Astrocyte of the cerebellum (primary cell): ENCODE measurements at regions of chr5 and their contacts with region 1.

Region 1: GRCh38 chr5:10921160-10921559 is 160.1 kb upstream of the DAP start:
- DNase-seq: no peak
- H3K4me3 ChIP-seq: no peak overlapping the region
- CTCF ChIP-seq: no peak

Region 2: GRCh38 chr5:10838038-10838437 is 83.1 kb before region 1 on chr5:
- in situ Hi-C with region 1: loop called (anchors 5 kb)
- DNase-seq: no peak
- H3K4me3 ChIP-seq: no peak overlapping the region
- CTCF ChIP-seq: no peak

Region 3: DNA sequence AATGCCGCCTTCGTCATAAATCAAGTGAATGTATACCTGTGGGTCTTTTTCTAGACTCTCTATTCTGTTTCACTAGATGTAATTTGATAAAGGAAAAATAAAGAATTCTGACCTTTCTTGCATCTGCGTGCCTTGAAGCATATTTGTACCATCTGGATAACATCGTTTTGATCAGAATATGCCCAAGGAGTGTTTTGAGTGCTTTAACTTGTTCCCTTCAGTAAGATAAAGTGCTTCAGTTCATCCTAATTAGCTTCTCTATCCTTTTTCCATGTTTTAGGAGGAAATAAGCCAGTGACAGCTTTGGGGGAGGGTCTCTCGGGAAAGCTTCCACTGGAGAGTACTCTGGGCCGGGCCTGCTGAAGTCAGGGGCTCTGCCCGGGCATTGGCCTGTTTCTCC is 46.6 kb before region 1 on chr5:
- in situ Hi-C with region 1: no loop called
- DNase-seq: no peak
- H3K4me3 ChIP-seq: no peak overlapping the region
- CTCF ChIP-seq: no peak

Region 4: DNA sequence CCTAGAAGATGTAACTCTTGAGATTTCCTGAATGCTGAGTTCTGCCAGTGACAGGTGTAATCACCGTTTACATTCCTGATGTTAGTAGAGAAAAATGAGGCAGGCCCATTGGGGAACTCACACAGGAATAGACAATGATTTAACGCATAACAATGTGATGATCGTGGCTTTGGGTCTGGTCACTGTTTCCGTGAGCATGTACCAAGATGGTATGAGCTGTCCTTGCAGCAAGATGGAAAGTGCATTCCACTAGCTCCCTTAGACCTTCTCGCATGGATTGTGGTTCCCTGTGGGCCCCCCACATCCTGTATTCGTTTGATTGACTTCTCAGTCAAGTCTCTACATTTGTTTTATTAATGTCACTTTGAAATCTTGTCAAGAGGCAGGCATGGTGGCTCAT is 36.1 kb before region 1 on chr5:
- in situ Hi-C with region 1: no loop called
- DNase-seq: no peak
- H3K4me3 ChIP-seq: no peak overlapping the region
- CTCF ChIP-seq: no peak